CD4-positive, alpha-beta T cell (primary cell): ENCODE measurements at regions of chr5 and their contacts with region 1.

Region 1: GRCh38 chr5:138065102-138065501 is 18.7 kb upstream of the WNT8A start:
- DNase-seq: peak in 2 of 14 experiments; percentile 17 to 24
- ATAC-seq: no peak
- H3K4me3 ChIP-seq: no peak overlapping the region
- H3K4me3 Mint-ChIP-seq: no peak overlapping the region
- H3K27ac ChIP-seq: no peak overlapping the region
- H3K27ac Mint-ChIP-seq: no peak overlapping the region
- H3K4me1 ChIP-seq: no peaks in the 10 kb centered on the region
- H3K4me1 Mint-ChIP-seq: peaks cover 6% of the 10 kb centered on the region
- H3K27me3 ChIP-seq: no peaks in the 10 kb centered on the region
- H3K27me3 Mint-ChIP-seq: no peaks in the 10 kb centered on the region
- CTCF ChIP-seq: no peak

Region 2: GRCh38 chr5:137629646-137630045 is 435.5 kb before region 1 on chr5:
- CTCF ChIA-PET with region 1: interaction called, 16 read pairs
- POLR2A ChIA-PET with region 1: no interaction called
- intact Hi-C with region 1: loop called (anchors 1 kb)
- DNase-seq: peak in 5 of 14 experiments; percentile 7 to 75 (median 58)
- ATAC-seq: peak; percentile 61
- H3K4me3 ChIP-seq: no peak overlapping the region
- H3K4me3 Mint-ChIP-seq: no peak overlapping the region
- H3K27ac ChIP-seq: no peak overlapping the region
- H3K27ac Mint-ChIP-seq: no peak overlapping the region
- H3K4me1 ChIP-seq: no peaks in the 10 kb centered on the region
- H3K4me1 Mint-ChIP-seq: no peaks in the 10 kb centered on the region
- H3K27me3 ChIP-seq: no peaks in the 10 kb centered on the region
- H3K27me3 Mint-ChIP-seq: no peaks in the 10 kb centered on the region
- CTCF ChIP-seq: peak; percentile 88

Region 3: DNA sequence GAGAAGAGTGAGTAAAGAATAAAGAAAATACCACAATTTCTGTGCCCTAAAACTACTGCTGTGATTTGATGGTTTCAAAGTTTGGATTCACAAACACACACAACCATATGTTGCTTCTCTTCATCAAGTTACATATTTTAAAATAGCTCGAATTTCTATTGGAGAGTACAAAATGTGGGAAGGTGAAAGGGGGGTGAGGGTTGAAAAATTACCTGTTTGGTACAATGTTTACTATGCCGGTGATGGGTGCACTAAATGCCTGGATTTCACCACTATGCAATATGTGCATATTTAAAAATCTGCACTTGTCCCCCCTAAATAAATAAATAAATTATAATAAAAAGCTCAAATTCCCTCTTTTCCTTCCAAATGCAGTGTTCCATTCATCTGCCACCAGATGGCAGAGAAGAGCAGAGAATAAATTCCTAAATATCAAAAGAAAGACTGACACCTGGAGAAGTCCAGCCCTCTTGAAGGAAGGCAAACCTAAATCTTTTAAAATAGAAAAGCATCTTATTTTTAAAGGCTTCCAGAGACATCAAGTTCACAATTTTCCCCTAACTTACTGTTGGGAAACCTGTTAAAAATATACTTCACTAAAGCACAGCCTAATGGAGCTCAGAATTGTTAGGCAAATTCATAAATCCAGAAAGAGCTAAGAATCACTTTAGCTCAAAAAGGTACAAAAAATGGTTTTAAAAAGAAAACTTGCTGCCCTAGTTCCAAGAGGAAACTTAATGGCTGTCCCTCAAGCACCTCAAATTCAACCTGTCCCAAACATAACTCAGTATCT is 286.1 kb before region 1 on chr5:
- CTCF ChIA-PET with region 1: interaction called, 4 read pairs
- POLR2A ChIA-PET with region 1: no interaction called
- intact Hi-C with region 1: loop called (anchors 2 to 5 kb)
- DNase-seq: peak in 4 of 14 experiments; percentile 4 to 55 (median 32)
- ATAC-seq: no peak
- H3K4me3 ChIP-seq: no peak overlapping the region
- H3K4me3 Mint-ChIP-seq: no peak overlapping the region
- H3K27ac ChIP-seq: no peak overlapping the region
- H3K27ac Mint-ChIP-seq: no peak overlapping the region
- H3K4me1 ChIP-seq: no peaks in the 10 kb centered on the region
- H3K4me1 Mint-ChIP-seq: no peaks in the 10 kb centered on the region
- H3K27me3 ChIP-seq: no peaks in the 10 kb centered on the region
- H3K27me3 Mint-ChIP-seq: no peaks in the 10 kb centered on the region
- CTCF ChIP-seq: peak; percentile 91

Region 4: GRCh38 chr5:138077065-138077696 is 12.1 kb after region 1 on chr5:
- CTCF ChIA-PET with region 1: interaction called, 10 read pairs
- POLR2A ChIA-PET with region 1: no interaction called
- intact Hi-C with region 1: no loop called
- DNase-seq: peak; percentile 14 to 75 (median 38)
- ATAC-seq: peak; percentile 51
- H3K4me3 ChIP-seq: no peak overlapping the region
- H3K4me3 Mint-ChIP-seq: no peak overlapping the region
- H3K27ac ChIP-seq: no peak overlapping the region
- H3K27ac Mint-ChIP-seq: no peak overlapping the region
- H3K4me1 ChIP-seq: peaks cover 12% of the 10 kb centered on the region
- H3K4me1 Mint-ChIP-seq: peaks cover 9% of the 10 kb centered on the region
- H3K27me3 ChIP-seq: no peaks in the 10 kb centered on the region
- H3K27me3 Mint-ChIP-seq: no peaks in the 10 kb centered on the region
- CTCF ChIP-seq: peak; percentile 98